ENCODE measurements at regions of chr4 and their contacts with region 1.

Region 1: DNA sequence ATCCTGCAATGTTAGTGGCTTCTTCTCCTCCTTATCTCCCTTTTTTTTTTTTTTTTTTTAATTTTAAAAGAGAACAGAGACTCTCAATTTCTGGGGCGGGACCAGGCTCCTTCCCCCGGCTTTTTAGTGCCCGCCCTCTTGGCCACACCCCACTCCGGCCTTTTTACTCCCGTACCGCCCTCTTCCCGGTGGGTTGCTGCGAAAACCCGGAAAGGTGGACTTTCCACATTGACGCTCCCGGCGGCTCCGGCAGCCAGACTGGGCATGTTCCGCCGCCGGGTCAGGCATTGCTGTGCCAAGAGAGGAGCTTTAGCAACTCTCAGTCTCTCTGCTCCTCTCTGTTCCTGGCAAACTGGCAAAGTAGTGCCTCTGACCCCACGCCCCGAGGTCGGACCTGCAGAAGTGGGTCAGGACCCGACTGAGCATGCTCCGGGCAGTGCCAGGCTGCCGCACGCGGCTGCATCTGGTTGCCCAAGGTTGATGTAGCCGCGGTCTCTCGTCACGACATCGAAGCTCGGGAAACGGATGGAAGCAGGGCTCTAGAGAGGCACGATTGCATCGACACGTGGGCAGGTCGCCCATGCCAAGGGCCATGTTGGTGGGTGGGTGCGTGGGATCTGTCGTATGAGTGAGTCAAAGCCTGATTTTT is 1.1 kb upstream of the MFAP3L start:
- DNase-seq: peak; percentile 96
- H3K4me3 ChIP-seq: peak overlapping the region; percentile 37 to 88 (median 72)
- H3K27ac ChIP-seq: peak overlapping the region; percentile 94 to 96 (median 96)
- H3K4me1 ChIP-seq: peaks cover 0 to 12% (median 10%) of the 10 kb centered on the region in 4 donors
- H3K27me3 ChIP-seq: peaks cover 19% of the 10 kb centered on the region
- CTCF ChIP-seq: no peak
- EP300 ChIP-seq: no peak
- POLR2A ChIP-seq: no peak

Region 2: GRCh38 chr4:169612871-169613859 is 414.1 kb before region 1 on chr4:
- in situ Hi-C with region 1: loop called in 2 of 4 experiments (anchors 25 kb)
- intact Hi-C with region 1: loop called (anchors 2 kb)
- DNase-seq: peak; percentile 87
- H3K4me3 ChIP-seq: peak overlapping the region; percentile 12 to 81 (median 73)
- H3K27ac ChIP-seq: peak overlapping the region; percentile 95 to 97 (median 96)
- H3K4me1 ChIP-seq: peaks cover 5 to 25% (median 14%) of the 10 kb centered on the region in 4 donors
- H3K27me3 ChIP-seq: no peaks in the 10 kb centered on the region
- CTCF ChIP-seq: peak; percentile 62 to 71 (median 68)
- EP300 ChIP-seq: no peak
- POLR2A ChIP-seq: no peak

Region 3: DNA sequence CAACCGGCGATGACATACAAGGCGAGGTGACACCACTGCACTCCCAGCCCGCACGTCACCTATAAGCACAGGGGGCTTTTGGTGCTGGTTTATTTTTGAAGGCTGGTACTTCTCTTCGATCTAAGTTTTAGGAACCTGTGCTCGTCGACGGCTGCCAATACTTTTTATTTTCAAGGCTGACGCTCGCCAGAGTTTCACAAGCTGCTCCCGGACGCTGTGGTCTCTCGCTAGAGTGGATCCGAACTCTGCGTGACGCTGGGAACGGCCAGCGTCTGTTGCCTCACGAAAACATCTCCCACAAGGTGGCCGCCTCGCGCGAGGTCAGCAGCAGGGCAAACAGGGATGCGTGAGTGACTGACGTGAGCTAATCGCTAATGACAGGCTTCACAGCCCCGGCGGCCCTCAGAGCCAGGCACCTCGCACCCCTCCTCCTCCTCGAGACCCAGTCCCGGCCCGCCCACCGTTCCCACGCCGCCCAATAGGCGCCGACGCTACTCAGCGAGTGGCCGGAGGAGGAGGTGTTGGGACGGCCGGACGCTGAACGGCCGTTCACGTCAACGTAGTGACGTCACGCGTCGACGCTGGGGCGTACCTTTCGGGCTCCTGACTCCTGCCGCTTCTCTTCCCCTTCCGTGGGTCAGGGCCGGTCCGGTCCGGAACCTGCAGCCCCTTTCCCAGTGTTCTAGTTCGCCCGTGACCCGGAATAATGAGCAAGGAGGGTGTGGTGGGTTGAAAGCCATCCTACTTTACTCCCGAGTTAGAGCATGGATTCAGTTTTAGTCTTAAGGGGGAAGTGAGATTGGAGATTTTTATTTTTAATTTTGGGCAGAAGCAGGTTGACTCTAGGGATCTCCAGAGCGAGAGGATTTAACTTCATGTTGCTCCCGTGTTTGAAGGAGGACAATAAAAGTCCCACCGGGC is 407.1 kb before region 1 on chr4 and contains the start of gene CLCN3:
- in situ Hi-C with region 1: loop called in 3 of 4 experiments (anchors 25 kb)
- intact Hi-C with region 1: no loop called
- DNase-seq: peak; percentile 98
- H3K4me3 ChIP-seq: peak within 1 kb of the TSS; percentile 57 to 69 (median 61)
- H3K27ac ChIP-seq: peak within 1 kb of the TSS; percentile 92 to 97 (median 96)
- H3K4me1 ChIP-seq: peaks cover 4 to 38% (median 27%) of the 10 kb centered on the region in 4 donors
- H3K27me3 ChIP-seq: no peaks in the 10 kb centered on the region
- CTCF ChIP-seq: peak in 1 of 5 experiments; percentile 41
- EP300 ChIP-seq: peak; percentile 51
- POLR2A ChIP-seq: peak; percentile 96
- total RNA-seq, gene CLCN3: 46.8 to 91.1 (median 69.3) TPM

Region 4: DNA sequence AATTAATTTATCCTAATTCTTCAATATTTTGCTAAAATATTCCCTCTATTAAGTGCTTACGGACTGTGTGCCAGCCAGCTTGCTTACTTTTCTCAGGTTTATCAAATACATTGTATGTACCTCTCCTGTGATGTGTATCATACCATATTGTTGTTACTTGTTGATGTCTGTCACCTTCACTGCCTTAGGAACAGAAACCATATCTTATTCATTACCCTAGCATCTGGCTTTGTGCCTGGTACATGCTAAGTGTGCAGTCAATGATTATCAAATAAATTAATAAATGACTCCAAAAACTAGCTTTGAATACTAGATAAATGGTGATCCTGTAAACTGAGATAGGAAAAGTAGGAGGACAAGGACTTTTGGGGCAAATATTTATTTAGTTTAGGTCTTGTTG is 400.0 kb before region 1 on chr4:
- in situ Hi-C with region 1: loop called in 3 of 4 experiments (anchors 25 kb)
- intact Hi-C with region 1: no loop called
- DNase-seq: no peak
- H3K4me3 ChIP-seq: no peak overlapping the region
- H3K27ac ChIP-seq: no peak overlapping the region
- H3K4me1 ChIP-seq: peaks cover 0 to 17% (median 10%) of the 10 kb centered on the region in 4 donors
- H3K27me3 ChIP-seq: no peaks in the 10 kb centered on the region
- CTCF ChIP-seq: no peak
- EP300 ChIP-seq: no peak
- POLR2A ChIP-seq: no peak

Region 5: DNA sequence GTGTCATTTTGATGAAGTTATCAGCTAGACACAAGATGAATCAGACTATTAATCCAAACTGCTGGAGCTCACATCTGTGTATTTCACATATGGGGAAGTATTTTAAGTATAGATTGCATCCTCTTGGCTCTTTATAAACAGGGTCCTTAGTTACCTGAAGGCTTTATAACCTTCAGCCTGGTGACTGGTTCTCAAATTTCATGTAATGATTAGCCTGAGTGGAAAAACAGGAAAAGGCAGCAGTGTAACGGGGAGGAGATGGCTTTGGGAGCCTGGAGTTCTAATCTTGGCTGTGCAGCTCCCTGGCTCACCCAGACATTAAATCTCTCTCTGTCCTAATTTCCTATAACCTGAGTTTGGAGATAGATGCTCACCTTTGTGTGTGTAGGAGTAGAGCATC is 165.7 kb before region 1 on chr4:
- in situ Hi-C with region 1: no loop called
- intact Hi-C with region 1: no loop called
- DNase-seq: no peak
- H3K4me3 ChIP-seq: no peak overlapping the region
- H3K27ac ChIP-seq: no peak overlapping the region
- H3K4me1 ChIP-seq: no peaks in the 10 kb centered on the region
- H3K27me3 ChIP-seq: no peaks in the 10 kb centered on the region
- CTCF ChIP-seq: no peak
- EP300 ChIP-seq: no peak
- POLR2A ChIP-seq: no peak